Activated naive CD4-positive, alpha-beta T cell treated with anti-CD3 and anti-CD28 coated beads for 36 hours (primary cell): ENCODE measurements at regions of chr17 and their contacts with region 1.

Region 1: GRCh38 chr17:27805520-27806146 is 5.3 kb upstream of the NOS2 start:
- DNase-seq: peak; percentile 93
- H3K4me3 Mint-ChIP-seq: peak overlapping the region; percentile 46
- H3K27ac Mint-ChIP-seq: peak overlapping the region; percentile 77
- H3K4me1 Mint-ChIP-seq: peaks cover 41% of the 10 kb centered on the region
- H3K27me3 Mint-ChIP-seq: no peaks in the 10 kb centered on the region

Region 2: DNA sequence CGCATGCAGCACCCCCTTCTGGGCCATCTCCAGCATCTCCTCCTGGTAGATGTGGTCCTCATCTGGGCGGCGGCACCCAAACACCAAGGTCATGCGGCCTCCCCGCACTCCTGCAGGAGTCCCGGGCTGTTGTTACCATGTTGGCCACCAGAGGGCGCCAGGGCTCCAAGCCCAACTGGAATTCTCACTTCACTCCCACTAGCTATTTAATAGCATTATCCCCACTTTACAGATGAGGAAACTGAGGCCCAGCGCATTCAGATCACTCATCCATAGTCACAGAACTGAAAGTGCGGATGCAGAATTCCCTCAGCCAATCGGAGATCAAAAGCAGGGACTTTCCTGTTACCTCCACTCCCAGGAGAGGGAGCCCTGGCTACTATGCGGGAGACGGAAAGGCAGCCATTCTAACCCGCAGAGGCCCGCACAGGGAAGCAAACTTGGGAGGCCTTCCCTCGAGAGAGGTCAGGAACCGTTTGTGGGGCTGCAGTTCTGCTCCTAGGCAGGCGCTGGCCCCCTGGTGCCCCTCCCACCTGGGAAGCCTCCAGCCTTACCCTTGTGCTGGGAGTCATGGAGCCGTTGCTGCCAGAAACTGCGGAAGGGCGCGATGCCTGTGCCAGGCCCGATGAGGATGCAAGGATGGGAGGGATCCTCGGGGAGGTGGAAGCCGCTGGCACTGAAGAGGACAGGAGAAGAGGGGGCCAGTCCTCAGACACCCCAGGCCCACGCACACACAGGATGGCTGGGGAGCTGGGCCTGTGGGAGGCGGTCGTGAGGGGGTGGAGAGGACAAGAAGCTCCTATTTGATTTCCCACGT is 45.4 kb before region 1 on chr17:
- CTCF ChIA-PET with region 1: interaction called, 8 read pairs
- intact Hi-C with region 1: loop called (anchors 1 kb)
- DNase-seq: peak; percentile 83
- H3K4me3 Mint-ChIP-seq: no peak overlapping the region
- H3K27ac Mint-ChIP-seq: no peak overlapping the region
- H3K4me1 Mint-ChIP-seq: no peaks in the 10 kb centered on the region
- H3K27me3 Mint-ChIP-seq: no peaks in the 10 kb centered on the region

Region 3: DNA sequence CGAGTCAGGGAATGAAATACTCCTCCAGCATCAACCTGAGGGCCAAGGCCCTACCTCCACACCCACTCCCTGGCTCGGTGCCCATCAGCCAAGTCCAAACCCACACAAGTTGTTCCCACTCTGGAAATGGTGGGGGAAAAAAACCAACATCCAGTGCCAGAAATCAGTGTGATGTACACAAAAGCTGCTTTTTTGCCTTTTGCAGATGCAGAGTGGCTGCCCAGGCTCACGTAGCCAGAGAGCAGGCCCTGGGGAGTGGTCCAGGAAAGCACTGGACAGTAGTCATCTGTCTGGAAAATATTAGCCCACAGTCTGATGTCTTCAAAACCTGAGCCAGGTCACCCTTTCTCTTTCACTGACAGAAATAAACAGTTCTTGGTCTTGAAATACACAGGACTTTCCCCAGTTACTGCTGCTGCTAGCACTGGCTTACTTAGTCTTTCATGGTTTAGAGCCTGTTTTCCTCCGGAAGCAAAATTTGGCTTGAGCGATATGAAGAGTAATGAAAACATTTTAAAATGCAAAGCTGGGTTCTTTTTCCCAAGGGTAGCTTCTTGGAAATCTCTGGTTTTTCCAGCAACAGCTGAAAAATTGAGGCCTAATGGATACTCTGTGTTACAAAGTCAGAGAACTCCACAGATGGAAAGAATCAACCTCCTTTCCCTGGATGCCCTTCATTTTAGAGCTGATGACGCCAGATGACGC is 12.9 kb after region 1 on chr17:
- CTCF ChIA-PET with region 1: interaction called, 10 read pairs
- intact Hi-C with region 1: no loop called
- DNase-seq: no peak
- H3K4me3 Mint-ChIP-seq: no peak overlapping the region
- H3K27ac Mint-ChIP-seq: no peak overlapping the region
- H3K4me1 Mint-ChIP-seq: no peaks in the 10 kb centered on the region
- H3K27me3 Mint-ChIP-seq: no peaks in the 10 kb centered on the region

Region 4: GRCh38 chr17:27846042-27846655 is 40.5 kb after region 1 on chr17:
- CTCF ChIA-PET with region 1: interaction called, 9 read pairs
- intact Hi-C with region 1: loop called (anchors 1 kb)
- DNase-seq: peak; percentile 30
- H3K4me3 Mint-ChIP-seq: peak overlapping the region; percentile 60
- H3K27ac Mint-ChIP-seq: peak overlapping the region; percentile 34
- H3K4me1 Mint-ChIP-seq: peaks cover 16% of the 10 kb centered on the region
- H3K27me3 Mint-ChIP-seq: no peaks in the 10 kb centered on the region

Region 5: GRCh38 chr17:27879987-27880608 is 74.5 kb after region 1 on chr17:
- CTCF ChIA-PET with region 1: interaction called, 510 read pairs
- intact Hi-C with region 1: loop called (anchors 1 kb)
- DNase-seq: peak; percentile 89
- H3K4me3 Mint-ChIP-seq: no peak overlapping the region
- H3K27ac Mint-ChIP-seq: no peak overlapping the region
- H3K4me1 Mint-ChIP-seq: peaks cover 19% of the 10 kb centered on the region
- H3K27me3 Mint-ChIP-seq: no peaks in the 10 kb centered on the region

Region 6: GRCh38 chr17:27959382-27959709 is 153.7 kb after region 1 on chr17:
- CTCF ChIA-PET with region 1: no interaction called
- intact Hi-C with region 1: no loop called
- DNase-seq: no peak
- H3K4me3 Mint-ChIP-seq: no peak overlapping the region
- H3K27ac Mint-ChIP-seq: no peak overlapping the region
- H3K4me1 Mint-ChIP-seq: no peaks in the 10 kb centered on the region
- H3K27me3 Mint-ChIP-seq: no peaks in the 10 kb centered on the region

Region 7: DNA sequence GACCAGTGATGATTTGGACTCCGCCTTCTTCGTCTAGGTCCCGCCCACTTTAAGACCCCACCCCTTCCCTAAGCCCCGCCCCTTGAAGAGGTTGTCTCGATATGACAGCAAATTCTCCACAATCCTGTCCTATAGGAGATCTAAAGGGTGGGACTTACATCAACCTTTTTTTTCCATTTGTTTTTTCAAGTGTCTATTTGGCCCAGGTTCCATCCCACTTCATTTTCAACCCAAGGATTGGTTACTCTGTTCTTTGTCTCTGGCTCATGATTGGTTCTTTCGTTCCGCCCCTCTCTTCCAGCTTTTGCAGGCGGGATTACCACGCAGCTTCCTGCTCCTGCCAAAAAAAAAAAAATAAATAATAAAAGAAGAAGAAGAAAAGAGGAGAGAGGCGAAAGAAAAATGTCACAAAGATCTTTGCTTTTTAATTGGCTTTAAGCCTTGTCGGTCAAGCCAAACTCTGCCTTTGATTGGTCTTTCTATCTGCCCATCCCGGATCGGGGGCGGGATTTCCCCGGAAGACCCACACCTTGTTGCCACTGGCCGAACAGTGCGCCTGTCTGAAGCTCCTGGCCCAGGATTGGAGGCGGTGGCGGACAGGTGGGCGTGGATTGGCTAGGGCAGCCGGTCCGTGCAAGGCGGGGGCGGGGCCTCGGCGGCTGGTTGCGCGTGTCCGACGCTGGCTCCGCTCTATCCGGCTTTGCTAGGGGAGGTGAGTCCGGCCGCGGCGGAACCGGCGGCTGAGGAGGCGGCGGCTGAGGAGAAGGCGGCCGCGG is 235.6 kb after region 1 on chr17:
- CTCF ChIA-PET with region 1: interaction called, 3 read pairs
- intact Hi-C with region 1: loop called (anchors 1 kb)
- DNase-seq: peak; percentile 99
- H3K4me3 Mint-ChIP-seq: peak overlapping the region; percentile 81
- H3K27ac Mint-ChIP-seq: peak overlapping the region; percentile 73
- H3K4me1 Mint-ChIP-seq: peaks cover 42% of the 10 kb centered on the region
- H3K27me3 Mint-ChIP-seq: no peaks in the 10 kb centered on the region